ENCODE measurements at regions of chr10 and their contacts with region 1.

Region 1: DNA sequence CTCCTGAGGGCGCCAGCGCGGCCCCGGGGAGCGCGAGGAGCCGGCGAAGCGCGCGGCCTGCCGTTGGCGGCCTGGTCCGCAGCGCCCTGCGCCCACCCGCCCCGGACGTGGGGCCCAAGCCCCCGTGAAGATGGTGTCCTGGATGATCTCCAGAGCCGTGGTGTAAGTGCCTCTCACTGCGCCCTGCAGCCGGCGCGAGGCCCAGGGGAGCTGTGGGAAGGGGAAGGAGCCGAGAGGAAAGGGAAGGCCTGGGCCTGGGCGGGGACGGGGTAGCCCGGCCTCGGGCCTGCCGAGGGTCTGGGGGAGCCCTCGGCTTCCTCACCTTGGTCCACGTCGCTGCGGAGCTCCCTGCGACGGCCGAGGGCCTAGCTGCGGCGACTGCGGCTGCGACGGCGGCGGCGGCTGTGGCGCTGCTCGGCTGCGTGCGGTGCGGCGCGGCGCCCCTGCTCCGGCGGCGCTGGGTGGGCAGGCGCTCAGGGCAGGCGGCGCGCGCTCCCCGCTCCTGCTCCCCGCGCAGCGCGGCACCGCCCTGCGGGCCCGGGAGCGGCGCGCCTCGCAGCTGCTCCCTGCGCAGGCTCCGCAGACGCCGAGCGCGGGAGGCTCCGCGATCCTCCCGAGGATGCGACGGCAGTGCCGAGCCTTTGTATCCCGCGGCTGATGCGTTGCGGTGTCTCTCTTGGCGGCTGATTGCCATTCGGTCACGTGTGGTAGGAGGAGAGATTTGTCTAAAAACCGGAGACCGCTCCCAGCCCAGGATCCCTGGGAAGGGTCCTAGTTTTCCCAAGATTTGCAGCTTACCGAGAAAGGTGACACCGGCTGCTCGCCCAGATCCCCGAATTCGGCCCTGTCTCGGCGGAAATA is 445 bp downstream of the REEP3 start:
- DNase-seq: peak; percentile 94
- ATAC-seq: peak; percentile 58
- H3K4me3 ChIP-seq: peak overlapping the region; percentile 75
- H3K27ac ChIP-seq: peak overlapping the region; percentile 85
- H3K4me1 ChIP-seq: peaks cover 65% of the 10 kb centered on the region
- H3K27me3 ChIP-seq: no peaks in the 10 kb centered on the region
- CTCF ChIP-seq: no peak

Region 2: DNA sequence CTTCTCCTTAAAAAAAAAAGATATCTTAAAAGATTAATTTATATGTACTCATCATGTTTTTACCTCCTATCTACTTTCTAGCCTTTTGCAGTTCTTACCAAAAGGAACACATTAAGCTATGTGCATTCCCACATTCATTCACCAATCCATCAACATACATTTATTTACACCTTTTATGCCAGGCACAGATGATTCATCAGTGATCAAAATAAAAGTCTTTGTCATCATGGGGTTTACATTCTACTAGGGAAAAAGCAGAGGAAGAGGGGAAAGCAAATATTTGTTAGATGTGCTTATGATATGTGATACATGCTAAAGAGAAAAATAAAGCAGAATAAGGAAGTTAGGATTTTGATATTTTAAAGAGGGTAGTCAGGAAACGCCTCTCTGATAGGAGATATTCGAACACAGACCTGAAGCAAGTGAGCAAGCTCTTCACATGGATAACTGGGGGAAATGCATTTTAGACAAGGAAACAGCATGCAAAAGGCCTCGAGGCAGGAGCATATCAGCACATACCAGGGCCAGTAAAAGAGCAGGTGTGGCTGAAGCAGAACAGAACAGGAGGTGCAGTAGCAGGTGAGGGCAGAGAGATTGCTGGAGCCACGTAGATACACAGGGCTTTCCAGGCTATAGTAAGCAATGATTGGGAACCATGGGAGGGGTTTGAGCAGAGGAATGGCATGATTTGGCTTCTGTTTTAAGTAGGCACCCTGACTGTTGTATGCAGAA is 67.0 kb after region 1 on chr10:
- CTCF ChIA-PET with region 1: no interaction called
- POLR2A ChIA-PET with region 1: no interaction called
- intact Hi-C with region 1: loop called (anchors 5 kb)
- DNase-seq: peak; percentile 93
- ATAC-seq: peak; percentile 79
- H3K4me3 ChIP-seq: peak overlapping the region; percentile 2; the same call in 1 of the 2 replicates
- H3K27ac ChIP-seq: peak overlapping the region; percentile 44
- H3K4me1 ChIP-seq: peaks cover 31% of the 10 kb centered on the region
- H3K27me3 ChIP-seq: no peaks in the 10 kb centered on the region
- CTCF ChIP-seq: no peak

Region 3: GRCh38 chr10:63622097-63622496 is 100.5 kb after region 1 on chr10:
- CTCF ChIA-PET with region 1: interaction called, 11 read pairs
- POLR2A ChIA-PET with region 1: no interaction called
- intact Hi-C with region 1: no loop called
- DNase-seq: peak; percentile 79
- ATAC-seq: peak; percentile 94
- H3K4me3 ChIP-seq: no peak overlapping the region
- H3K27ac ChIP-seq: peak overlapping the region; percentile 52
- H3K4me1 ChIP-seq: peaks cover 18% of the 10 kb centered on the region
- H3K27me3 ChIP-seq: no peaks in the 10 kb centered on the region
- CTCF ChIP-seq: no peak

Region 4: DNA sequence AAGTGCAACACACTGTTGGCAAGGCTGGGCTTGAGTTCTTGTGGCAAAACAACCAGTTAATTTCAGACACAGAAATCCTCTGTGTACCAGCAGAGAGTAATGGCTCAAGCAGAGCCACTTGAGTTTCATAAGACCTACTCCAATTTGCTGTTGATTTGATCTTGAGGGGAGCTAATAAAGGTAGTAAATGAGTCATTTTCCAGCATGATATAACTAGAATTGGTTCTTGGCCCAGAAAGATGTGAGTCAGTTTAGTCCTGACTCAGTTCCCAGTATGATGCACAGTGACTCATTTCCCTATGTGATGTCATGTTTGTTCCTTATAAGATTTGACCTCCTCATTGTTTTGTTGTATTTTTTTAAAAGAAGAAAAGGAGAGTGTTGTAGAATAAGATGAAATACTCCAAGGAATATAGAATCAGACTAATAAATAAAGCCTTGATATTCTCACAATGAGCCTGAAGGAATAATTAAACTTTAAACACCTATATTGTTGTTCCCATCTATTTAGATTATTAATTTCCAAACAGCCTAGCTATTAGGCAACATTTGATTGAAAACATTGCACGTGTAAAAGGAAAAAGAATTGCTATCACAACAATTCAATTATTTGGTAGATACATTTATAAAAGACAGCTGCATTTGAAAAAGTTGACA is 185.7 kb after region 1 on chr10:
- CTCF ChIA-PET with region 1: no interaction called
- POLR2A ChIA-PET with region 1: no interaction called
- intact Hi-C with region 1: loop called (anchors 1 kb)
- DNase-seq: peak; percentile 100
- ATAC-seq: peak; percentile 70
- H3K4me3 ChIP-seq: no peak overlapping the region
- H3K27ac ChIP-seq: peak overlapping the region; percentile 76
- H3K4me1 ChIP-seq: peaks cover 62% of the 10 kb centered on the region
- H3K27me3 ChIP-seq: no peaks in the 10 kb centered on the region
- CTCF ChIP-seq: no peak

Region 5: DNA sequence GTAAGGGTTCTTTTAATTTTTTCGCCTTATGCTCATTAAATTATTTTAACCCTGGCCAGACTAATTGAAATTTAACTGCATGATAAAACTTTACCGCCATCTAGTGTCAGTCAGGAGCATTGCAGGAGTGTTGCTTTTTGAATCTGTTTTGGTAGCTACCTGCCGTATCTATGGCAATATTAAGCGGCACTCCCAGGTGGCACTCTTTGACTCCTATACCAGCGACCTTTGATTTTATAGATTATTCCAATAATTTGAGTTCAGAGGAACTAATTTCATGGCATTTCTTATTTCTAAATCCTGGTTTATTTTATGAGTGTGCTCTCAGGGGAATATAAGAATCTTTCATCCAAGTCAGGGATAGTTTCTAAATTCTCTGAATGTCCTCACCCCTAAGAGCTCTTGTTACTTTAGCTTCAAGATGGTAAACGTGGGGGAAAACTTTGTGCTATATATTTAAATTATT is 198.5 kb after region 1 on chr10:
- CTCF ChIA-PET with region 1: interaction called, 5 read pairs
- POLR2A ChIA-PET with region 1: no interaction called
- intact Hi-C with region 1: loop called (anchors 2 kb)
- DNase-seq: peak; percentile 97
- ATAC-seq: peak; percentile 53
- H3K4me3 ChIP-seq: no peak overlapping the region
- H3K27ac ChIP-seq: no peak overlapping the region
- H3K4me1 ChIP-seq: peaks cover 29% of the 10 kb centered on the region
- H3K27me3 ChIP-seq: no peaks in the 10 kb centered on the region
- CTCF ChIP-seq: peak; percentile 100